ENCODE measurements at regions of chr13 and their contacts with region 1.

Region 1: GRCh38 chr13:95624020-95624419 is 20.5 kb downstream of the DZIP1 start:
- DNase-seq: peak; percentile 81
- H3K4me3 Mint-ChIP-seq: no peak overlapping the region
- H3K27ac Mint-ChIP-seq: no peak overlapping the region
- H3K4me1 Mint-ChIP-seq: no peaks in the 10 kb centered on the region
- H3K27me3 Mint-ChIP-seq: no peaks in the 10 kb centered on the region
- CTCF ChIP-seq: peak; percentile 73

Region 2: DNA sequence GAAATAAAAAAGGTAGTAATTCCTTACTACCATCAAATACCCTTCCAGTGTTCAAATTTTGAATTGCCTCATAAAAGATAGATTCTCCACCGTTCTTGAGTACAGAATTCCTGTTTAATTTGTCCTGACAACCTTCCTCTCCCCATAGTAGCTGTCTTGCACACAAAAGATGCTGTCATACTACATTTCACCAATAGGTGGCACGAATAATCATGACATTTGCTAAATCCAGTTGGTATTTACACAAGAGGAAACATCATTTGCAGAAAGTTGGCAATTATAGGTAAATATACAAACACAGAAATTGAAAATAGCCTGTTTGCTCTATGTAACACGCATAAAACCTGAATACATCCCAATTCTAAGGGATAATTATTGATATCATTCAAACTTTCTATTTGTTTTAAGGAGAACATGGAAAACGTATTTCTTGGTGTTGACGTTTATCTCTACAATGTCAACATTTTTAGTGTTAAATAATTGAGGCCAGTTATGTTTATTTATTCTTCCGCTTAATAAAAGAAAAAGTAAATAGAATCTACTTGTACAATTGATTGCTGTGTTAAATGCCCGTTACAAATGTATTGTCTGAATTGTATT is 129.8 kb before region 1 on chr13:
- CTCF ChIA-PET with region 1: interaction called, 8 read pairs
- POLR2A ChIA-PET with region 1: no interaction called
- intact Hi-C with region 1: loop called (anchors 1 kb)
- DNase-seq: peak; percentile 93
- H3K4me3 Mint-ChIP-seq: no peak overlapping the region
- H3K27ac Mint-ChIP-seq: no peak overlapping the region
- H3K4me1 Mint-ChIP-seq: peaks cover 6% of the 10 kb centered on the region
- H3K27me3 Mint-ChIP-seq: no peaks in the 10 kb centered on the region
- CTCF ChIP-seq: peak; percentile 71

Region 3: GRCh38 chr13:95593462-95593861 is 30.6 kb before region 1 on chr13:
- CTCF ChIA-PET with region 1: interaction called, 11 read pairs
- POLR2A ChIA-PET with region 1: no interaction called
- intact Hi-C with region 1: no loop called
- DNase-seq: no peak
- H3K4me3 Mint-ChIP-seq: no peak overlapping the region
- H3K27ac Mint-ChIP-seq: no peak overlapping the region
- H3K4me1 Mint-ChIP-seq: peaks cover 8% of the 10 kb centered on the region
- H3K27me3 Mint-ChIP-seq: no peaks in the 10 kb centered on the region
- CTCF ChIP-seq: no peak

Region 4: GRCh38 chr13:95644601-95645052 is 20.6 kb after region 1 on chr13 and contains the start of gene DZIP1:
- CTCF ChIA-PET with region 1: interaction called, 16 read pairs
- POLR2A ChIA-PET with region 1: interaction called, 14 read pairs
- intact Hi-C with region 1: no loop called
- DNase-seq: peak; percentile 80
- H3K4me3 Mint-ChIP-seq: peak within 1 kb of the TSS; percentile 82
- H3K27ac Mint-ChIP-seq: no peak within 1 kb of the TSS
- H3K4me1 Mint-ChIP-seq: peaks cover 5% of the 10 kb centered on the region
- H3K27me3 Mint-ChIP-seq: no peaks in the 10 kb centered on the region
- CTCF ChIP-seq: no peak
- total RNA-seq, gene DZIP1: 16.4 and 22.1 TPM in 2 replicates

Region 5: GRCh38 chr13:95671597-95671996 is 47.6 kb after region 1 on chr13:
- CTCF ChIA-PET with region 1: interaction called, 11 read pairs
- POLR2A ChIA-PET with region 1: interaction called, 13 read pairs
- intact Hi-C with region 1: no loop called
- DNase-seq: no peak
- H3K4me3 Mint-ChIP-seq: no peak overlapping the region
- H3K27ac Mint-ChIP-seq: no peak overlapping the region
- H3K4me1 Mint-ChIP-seq: peaks cover 23% of the 10 kb centered on the region
- H3K27me3 Mint-ChIP-seq: no peaks in the 10 kb centered on the region
- CTCF ChIP-seq: no peak

Region 6: DNA sequence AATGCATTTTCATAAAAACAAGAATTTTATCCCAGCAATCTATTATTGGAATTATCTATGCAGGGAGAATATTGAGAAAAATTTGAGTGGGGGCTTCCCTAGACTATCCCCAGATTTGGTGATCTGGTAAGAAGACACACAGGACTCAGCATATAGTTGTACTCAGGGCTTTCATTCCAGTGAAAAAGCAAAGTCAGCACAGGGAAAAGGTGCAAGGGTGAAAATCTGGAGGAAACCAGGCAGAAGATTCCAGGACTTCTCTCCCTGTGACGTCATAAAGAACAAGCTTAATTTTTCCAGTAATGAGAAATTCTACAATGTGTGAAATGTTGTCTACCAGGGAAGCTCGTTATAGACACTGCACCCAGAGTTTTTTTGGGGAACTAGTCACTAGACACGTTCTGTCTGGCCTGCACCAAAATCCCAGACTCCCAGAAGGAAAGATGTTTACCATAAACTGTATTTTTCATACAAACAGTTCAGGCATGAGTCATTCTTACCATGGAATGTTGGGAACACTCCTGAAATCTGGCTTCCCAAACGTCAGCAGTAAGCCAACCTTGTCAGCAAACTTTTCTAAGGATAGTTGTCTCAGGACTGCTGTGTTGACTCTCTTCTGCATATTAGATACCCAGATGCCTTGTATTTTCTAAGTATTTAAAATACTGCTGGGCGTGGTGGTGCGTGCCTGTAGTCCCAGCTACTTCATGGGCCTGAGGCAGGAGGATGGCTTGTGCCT is 160.3 kb after region 1 on chr13:
- CTCF ChIA-PET with region 1: interaction called, 8 read pairs
- POLR2A ChIA-PET with region 1: no interaction called
- intact Hi-C with region 1: loop called (anchors 2 kb)
- DNase-seq: peak; percentile 85
- H3K4me3 Mint-ChIP-seq: peak overlapping the region; percentile 16
- H3K27ac Mint-ChIP-seq: peak overlapping the region; percentile 94
- H3K4me1 Mint-ChIP-seq: peaks cover 20% of the 10 kb centered on the region
- H3K27me3 Mint-ChIP-seq: no peaks in the 10 kb centered on the region
- CTCF ChIP-seq: no peak

Measured in MCF 10A (cell line).